ENCODE measurements at regions of chr6 and their contacts with region 1.

Region 1: DNA sequence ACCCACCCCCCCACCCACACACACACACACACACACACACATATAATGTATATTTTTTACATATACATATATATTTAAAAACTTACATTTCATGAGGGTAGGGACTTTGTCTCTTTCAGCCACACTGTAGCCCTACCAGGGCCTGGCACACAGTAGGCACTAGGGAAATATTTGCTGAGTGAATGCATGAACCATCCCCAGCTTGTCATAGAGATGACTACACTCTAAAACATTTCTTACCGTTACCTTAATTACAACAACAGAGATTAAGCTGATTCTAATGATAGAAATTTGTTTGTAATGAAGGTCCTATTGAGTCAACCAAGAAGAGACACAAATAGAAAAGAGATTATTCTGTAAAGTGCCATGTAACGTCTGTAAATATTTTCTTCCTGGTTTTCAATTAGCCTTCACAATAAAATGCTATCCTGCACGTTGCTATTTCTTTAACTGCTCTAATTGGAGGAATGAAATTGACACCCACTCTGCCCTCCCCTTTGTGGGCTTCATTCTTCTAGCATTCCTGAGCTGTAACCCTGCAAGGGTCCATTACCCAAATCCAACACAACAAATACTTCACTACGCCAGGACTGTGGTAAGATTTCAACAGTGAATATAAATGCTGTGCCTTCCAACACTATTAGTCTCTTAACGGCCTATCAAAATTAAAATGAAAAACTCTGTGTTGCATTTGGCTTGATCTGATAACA is 30.8 kb downstream of the SIM1 start:
- DNase-seq: no peak
- ATAC-seq: no peak
- H3K4me3 ChIP-seq: no peak overlapping the region
- H3K27ac ChIP-seq: no peak overlapping the region
- H3K4me1 ChIP-seq: no peaks in the 10 kb centered on the region
- H3K27me3 ChIP-seq: peaks cover 0 to 76% (median 40%) of the 10 kb centered on the region in 7 donors
- CTCF ChIP-seq: no peak

Region 2: DNA sequence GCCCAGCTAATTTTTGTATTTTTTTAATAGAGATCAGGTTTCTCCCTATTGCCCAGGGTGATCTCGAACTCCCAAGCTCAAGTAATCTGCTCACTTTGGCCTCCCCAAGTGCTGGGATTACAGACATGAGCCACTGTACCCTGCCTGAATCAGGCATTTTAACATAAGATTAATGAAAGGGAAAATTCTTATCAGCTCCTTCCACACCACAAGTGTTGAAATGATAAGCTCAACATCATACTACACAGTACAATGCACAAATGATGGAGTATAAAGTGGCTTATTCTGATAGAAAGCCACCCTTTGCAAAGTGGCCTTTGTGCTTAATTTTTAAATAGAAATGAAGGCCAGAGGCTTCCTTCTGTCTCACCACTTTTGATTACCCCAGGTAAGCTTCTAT is 368.5 kb before region 1 on chr6:
- intact Hi-C with region 1: no loop called
- DNase-seq: no peak
- ATAC-seq: no peak
- H3K4me3 ChIP-seq: no peak overlapping the region
- H3K27ac ChIP-seq: no peak overlapping the region
- H3K4me1 ChIP-seq: no peaks in the 10 kb centered on the region
- H3K27me3 ChIP-seq: no peaks in the 10 kb centered on the region
- CTCF ChIP-seq: no peak

Region 3: DNA sequence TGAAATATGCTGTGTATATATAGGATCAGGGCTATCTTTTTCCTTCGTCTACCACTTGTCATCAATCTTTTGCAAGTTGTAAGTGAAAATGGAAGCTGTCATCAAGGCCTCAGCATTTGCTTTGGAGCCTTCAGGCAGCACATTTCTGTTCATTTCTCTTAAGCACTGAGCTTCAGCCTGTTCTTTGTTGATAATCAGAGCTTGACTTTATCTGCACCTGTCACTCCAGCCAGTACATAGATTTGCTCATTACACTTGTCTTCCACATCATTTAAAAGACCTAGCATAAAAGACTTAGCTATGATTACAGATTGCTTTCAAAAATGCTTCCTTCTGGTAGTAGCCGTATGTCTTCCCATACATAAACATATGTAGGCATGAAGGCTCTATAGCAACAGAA is 769.8 kb after region 1 on chr6:
- intact Hi-C with region 1: loop called in 1 of 10 experiments (anchors 5 kb)
- DNase-seq: no peak
- ATAC-seq: no peak
- H3K4me3 ChIP-seq: no peak overlapping the region
- H3K27ac ChIP-seq: no peak overlapping the region
- H3K4me1 ChIP-seq: no peaks in the 10 kb centered on the region
- H3K27me3 ChIP-seq: no peaks in the 10 kb centered on the region
- CTCF ChIP-seq: no peak